Activated T-helper 2 cell treated with anti-CD3 and anti-CD28 coated beads, Interferon-gamma antibody, Interleukin-2, Interleukin-4, amounts not matched to agents 10 μg/mL and 5 μg/mL and 100 μg/mL, durations not matched to agents 14 hours and 24 hours and 36 hours (primary cell): ENCODE measurements at regions of chr4 and their contacts with region 1.

Region 1: GRCh38 chr4:82900331-82901128 is at the start of gene THAP9:
- DNase-seq: peak; percentile 99
- H3K4me3 Mint-ChIP-seq: no peak within 1 kb of the TSS
- H3K27ac Mint-ChIP-seq: no peak within 1 kb of the TSS
- H3K4me1 Mint-ChIP-seq: peaks cover 38% of the 10 kb centered on the region
- H3K27me3 Mint-ChIP-seq: no peaks in the 10 kb centered on the region
- total RNA-seq, gene THAP9: 1.8 and 2.6 TPM in 2 replicates

Region 2: GRCh38 chr4:82430193-82430963 is 470.2 kb before region 1 on chr4 and contains the starts of genes ENOPH1 and HNRNPDL:
- intact Hi-C with region 1: loop called (anchors 1 kb)
- DNase-seq: peak; percentile 96
- H3K4me3 Mint-ChIP-seq: peak within 1 kb of the TSS; percentile 98
- H3K27ac Mint-ChIP-seq: peak within 1 kb of the TSS; percentile 99
- H3K4me1 Mint-ChIP-seq: peaks cover 44% of the 10 kb centered on the region
- H3K27me3 Mint-ChIP-seq: no peaks in the 10 kb centered on the region
- total RNA-seq, gene ENOPH1: 64.5 and 65.9 TPM in 2 replicates
- total RNA-seq, gene HNRNPDL: 470 and 486 TPM in 2 replicates

Region 3: GRCh38 chr4:82918091-82918490 is 17.6 kb after region 1 on chr4:
- intact Hi-C with region 1: no loop called
- DNase-seq: no peak
- H3K4me3 Mint-ChIP-seq: no peak overlapping the region
- H3K27ac Mint-ChIP-seq: no peak overlapping the region
- H3K4me1 Mint-ChIP-seq: no peaks in the 10 kb centered on the region
- H3K27me3 Mint-ChIP-seq: no peaks in the 10 kb centered on the region

Region 4: GRCh38 chr4:83012687-83013419 is 112.3 kb after region 1 on chr4:
- intact Hi-C with region 1: loop called (anchors 1 kb)
- DNase-seq: peak; percentile 96
- H3K4me3 Mint-ChIP-seq: peak overlapping the region; percentile 94
- H3K27ac Mint-ChIP-seq: peak overlapping the region; percentile 93
- H3K4me1 Mint-ChIP-seq: peaks cover 36% of the 10 kb centered on the region
- H3K27me3 Mint-ChIP-seq: no peaks in the 10 kb centered on the region

Region 5: DNA sequence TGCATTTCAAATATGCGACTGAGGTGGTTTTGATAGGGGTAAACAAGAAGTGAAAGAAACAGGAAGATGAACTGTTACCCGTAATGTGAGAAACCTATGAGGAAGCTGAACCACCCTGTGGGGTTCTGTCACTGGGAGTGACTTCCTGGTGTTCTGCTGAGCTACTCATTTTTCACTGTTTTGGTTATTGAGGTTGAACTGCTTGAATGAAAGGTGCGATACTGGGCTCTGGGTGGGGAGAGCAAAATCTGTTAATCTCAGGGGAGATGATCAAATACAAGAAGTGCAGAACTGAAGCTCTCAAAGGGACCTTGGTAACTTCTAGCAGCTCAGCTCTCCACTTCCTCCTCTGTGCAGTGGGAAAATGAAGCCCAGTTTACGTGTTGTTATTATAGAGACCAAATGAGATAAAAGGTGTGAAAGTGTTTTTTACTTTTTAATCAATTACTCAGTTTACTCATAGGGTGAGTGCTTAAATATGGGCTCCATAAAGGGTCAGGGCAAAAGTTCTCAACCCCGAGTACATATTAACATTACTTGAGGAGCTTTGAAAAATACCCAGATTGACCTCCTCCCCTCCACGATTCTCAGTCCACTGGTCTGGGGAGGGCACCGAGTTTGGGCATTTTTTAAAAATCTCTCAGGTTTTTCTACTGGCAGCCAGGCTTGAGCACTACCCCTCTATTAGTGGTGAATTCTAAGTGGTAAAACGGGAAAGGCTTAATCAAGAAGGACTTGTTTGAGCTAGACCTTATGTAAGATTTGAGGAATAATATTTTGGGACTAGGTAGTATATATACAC is 317.4 kb after region 1 on chr4:
- intact Hi-C with region 1: loop called (anchors 5 kb)
- DNase-seq: peak; percentile 74
- H3K4me3 Mint-ChIP-seq: peak overlapping the region; percentile 56
- H3K27ac Mint-ChIP-seq: peak overlapping the region; percentile 84
- H3K4me1 Mint-ChIP-seq: peaks cover 64% of the 10 kb centered on the region
- H3K27me3 Mint-ChIP-seq: peaks cover 13% of the 10 kb centered on the region

Region 6: DNA sequence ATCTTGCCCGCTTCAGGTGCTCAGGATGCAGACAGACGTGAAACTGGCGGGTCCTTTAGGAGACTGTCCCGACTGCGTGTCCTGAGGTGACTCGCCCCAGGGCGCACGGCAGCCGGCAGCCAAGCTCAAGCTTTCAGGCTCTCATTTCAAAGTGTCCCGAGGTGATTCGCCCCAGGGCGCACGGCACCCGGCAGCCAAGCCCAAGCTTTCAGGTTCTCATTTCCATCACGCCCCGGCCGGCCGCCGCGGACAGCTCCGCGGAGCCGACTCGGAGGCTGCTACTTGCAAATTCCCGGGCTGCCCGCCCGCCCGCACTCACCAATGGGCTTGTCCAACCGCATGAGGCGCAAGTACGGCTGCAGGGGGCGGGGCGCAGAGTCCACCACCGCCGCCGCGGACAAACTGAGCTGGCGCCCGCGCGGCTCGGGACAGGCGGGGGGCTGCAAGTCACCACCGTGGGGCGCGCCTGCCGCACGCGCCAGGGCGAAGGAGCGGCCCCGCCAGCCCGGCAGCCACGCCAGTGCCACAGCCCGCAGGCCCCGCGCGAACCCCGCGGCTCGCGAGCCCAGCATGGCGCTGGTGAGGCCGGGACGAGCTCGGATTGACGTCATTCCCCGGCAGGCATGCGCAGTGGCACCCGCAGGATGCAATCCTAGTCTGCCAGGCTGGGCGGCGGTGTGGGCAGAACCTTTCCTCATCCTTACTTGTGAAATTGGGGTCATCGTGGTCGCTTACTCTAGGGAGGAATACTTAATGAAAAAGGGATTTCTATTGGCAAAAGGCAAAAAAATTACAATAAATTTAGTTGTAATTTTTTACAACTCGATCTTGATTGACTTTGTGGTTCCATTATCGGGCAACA is 383.9 kb after region 1 on chr4 and contains the start of gene COQ2:
- intact Hi-C with region 1: loop called (anchors 5 kb)
- DNase-seq: peak; percentile 91
- H3K4me3 Mint-ChIP-seq: peak within 1 kb of the TSS; percentile 90
- H3K27ac Mint-ChIP-seq: peak within 1 kb of the TSS; percentile 95
- H3K4me1 Mint-ChIP-seq: peaks cover 45% of the 10 kb centered on the region
- H3K27me3 Mint-ChIP-seq: peaks cover 2% of the 10 kb centered on the region
- total RNA-seq, gene COQ2: 19.5 and 20.6 TPM in 2 replicates

Region 7: DNA sequence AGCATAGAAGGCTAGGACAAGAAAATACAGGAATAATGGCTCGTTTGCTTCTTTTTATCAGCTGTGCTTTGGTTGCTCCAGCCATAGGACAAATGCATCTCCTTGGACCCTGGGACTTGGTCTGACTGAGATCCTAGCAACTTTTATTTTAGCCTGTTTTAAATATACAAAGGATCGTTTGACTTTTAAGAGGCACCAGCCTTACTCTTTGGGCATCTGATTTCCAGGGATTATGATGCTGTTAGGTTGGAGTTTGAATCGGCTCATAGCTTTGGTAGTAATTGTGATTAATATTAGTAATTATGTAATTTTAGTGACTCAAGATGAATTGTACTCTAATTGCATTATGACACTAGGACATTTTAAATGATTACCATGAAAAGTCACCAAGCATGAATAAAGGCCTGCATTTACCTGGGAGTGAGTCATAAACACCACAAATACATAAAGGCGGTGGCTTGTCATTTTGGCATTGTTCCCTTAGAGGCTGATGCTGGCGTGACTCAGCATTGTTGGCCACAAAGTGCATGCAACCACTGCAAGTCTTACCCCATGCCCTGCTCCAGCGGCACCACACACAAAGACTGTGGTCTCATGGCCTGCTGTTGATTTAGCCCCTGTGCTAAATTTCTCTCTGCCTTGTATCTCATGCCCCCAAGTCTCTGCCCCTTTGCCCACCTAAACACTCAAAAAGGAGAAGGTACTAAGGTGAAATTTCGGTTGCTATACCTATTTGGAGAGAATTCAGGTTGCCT is 647.8 kb after region 1 on chr4:
- intact Hi-C with region 1: loop called (anchors 5 kb)
- DNase-seq: peak; percentile 68
- H3K4me3 Mint-ChIP-seq: no peak overlapping the region
- H3K27ac Mint-ChIP-seq: no peak overlapping the region
- H3K4me1 Mint-ChIP-seq: peaks cover 34% of the 10 kb centered on the region
- H3K27me3 Mint-ChIP-seq: peaks cover 1% of the 10 kb centered on the region